ENCODE measurements at regions of chr3 and their contacts with region 1.

Region 1: GRCh38 chr3:45656575-45657363 is 32.4 kb upstream of the SACM1L start:
- DNase-seq: peak; percentile 73 to 98
- H3K4me3 ChIP-seq: no peak overlapping the region
- H3K27ac ChIP-seq: peak overlapping the region; percentile 81
- H3K4me1 ChIP-seq: peaks cover 8 to 40% of the 10 kb centered on the region in 2 donors
- H3K27me3 ChIP-seq: no peaks in the 10 kb centered on the region
- CTCF ChIP-seq: peak; percentile 87 to 96 (median 94)

Region 2: GRCh38 chr3:44795197-44795596 is 861.6 kb before region 1 on chr3:
- intact Hi-C with region 1: no loop called
- DNase-seq: no peak
- H3K4me3 ChIP-seq: no peak overlapping the region
- H3K27ac ChIP-seq: no peak overlapping the region
- H3K4me1 ChIP-seq: no peaks in the 10 kb centered on the region
- H3K27me3 ChIP-seq: no peaks in the 10 kb centered on the region
- CTCF ChIP-seq: no peak

Region 3: DNA sequence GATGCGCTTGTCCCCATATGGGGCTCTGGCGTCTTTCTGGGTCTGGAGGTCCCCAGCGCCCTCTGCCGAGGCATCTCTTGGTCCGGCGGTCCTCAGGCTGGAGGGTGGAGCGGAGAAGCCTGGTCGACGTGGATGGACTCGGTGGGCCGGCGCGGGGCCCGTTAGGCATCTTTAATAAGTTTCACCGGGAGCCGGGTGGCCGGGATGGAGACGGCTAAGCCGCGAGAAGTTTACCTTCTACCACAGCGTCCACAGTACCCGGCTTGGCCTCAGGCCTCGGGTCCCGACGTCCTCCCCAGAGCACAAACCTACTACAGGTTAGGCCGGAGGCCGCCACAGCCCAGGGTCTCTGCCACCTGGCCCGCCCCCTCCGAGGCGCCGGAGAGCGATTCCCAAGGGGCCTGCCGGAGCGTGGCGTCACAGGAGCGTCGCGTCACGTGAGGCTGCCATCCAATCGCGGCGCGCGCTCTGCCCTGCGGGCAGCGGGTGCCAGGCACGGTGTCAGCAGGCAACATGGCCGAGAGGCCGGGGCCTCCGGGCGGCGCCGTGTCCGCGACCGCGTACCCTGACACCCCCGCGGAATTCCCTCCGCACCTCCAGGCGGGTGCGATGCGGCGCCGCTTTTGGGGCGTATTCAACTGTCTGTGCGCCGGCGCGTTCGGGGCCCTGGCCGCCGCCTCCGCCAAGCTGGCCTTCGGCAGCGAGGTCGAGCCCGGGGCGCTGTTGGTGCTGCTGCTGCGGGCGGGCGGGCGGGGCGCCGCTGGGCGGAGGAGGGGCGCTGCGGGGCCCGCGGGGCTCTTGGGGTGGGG is 795.2 kb before region 1 on chr3 and contains the start of gene TMEM42:
- intact Hi-C with region 1: loop called (anchors 10 kb)
- DNase-seq: peak; percentile 55 to 95
- H3K4me3 ChIP-seq: peak within 1 kb of the TSS; percentile 67 to 89
- H3K27ac ChIP-seq: peak within 1 kb of the TSS; percentile 91 to 96
- H3K4me1 ChIP-seq: peaks cover 0 to 11% of the 10 kb centered on the region in 2 donors
- H3K27me3 ChIP-seq: no peaks in the 10 kb centered on the region
- CTCF ChIP-seq: peak in 2 of 3 experiments; percentile 4 to 40
- total RNA-seq, gene TMEM42: not detected

Region 4: GRCh38 chr3:45507820-45508317 is 148.9 kb before region 1 on chr3:
- intact Hi-C with region 1: loop called (anchors 1 kb)
- DNase-seq: no peak
- H3K4me3 ChIP-seq: no peak overlapping the region
- H3K27ac ChIP-seq: no peak overlapping the region
- H3K4me1 ChIP-seq: no peaks in the 10 kb centered on the region
- H3K27me3 ChIP-seq: no peaks in the 10 kb centered on the region
- CTCF ChIP-seq: no peak

Region 5: DNA sequence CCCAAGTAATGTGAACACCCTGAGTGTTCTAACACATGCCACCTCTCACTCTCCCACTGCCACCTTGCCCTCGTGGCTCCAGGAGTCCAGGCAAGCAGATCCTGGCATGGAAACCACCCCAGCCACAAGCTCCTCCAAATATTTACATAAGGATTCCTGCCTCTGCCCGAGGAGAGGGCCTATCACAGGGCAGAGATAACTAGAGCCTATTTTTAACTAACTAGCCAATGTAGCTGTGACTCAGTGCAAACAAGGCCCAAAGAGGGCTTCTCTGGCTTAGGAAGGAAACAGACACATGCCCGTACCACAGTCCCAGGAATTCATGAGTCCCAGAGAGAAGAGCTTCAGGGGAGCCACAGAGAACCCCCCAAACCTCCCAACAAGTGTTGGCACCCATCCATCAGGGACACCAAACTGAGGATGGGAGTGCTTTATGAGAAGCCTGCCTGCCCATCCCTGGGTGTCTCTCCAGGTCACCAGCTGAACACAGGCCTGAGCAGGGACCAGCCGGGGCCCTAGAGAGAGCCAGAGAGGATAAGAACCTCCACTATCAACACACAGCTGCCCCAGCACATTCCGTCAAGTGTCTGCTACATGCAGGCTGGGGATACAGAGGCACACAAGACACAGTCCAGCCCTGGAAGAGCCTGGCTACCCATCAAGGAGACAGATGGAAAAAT is 329.7 kb after region 1 on chr3:
- intact Hi-C with region 1: loop called (anchors 10 kb)
- DNase-seq: peak in 1 of 2 donors; percentile 90
- H3K4me3 ChIP-seq: peak overlapping the region in 1 of 2 donors; percentile 7
- H3K27ac ChIP-seq: peak overlapping the region; percentile 94 to 99
- H3K4me1 ChIP-seq: peaks cover 53 to 83% of the 10 kb centered on the region in 2 donors
- H3K27me3 ChIP-seq: no peaks in the 10 kb centered on the region
- CTCF ChIP-seq: no peak